ENCODE measurements at regions of chr9 and their contacts with region 1.

Region 1: GRCh38 chr9:15211160-15211814 is 95.7 kb downstream of the TTC39B start:
- DNase-seq: peak; percentile 47
- H3K4me3 Mint-ChIP-seq: no peak overlapping the region
- H3K27ac Mint-ChIP-seq: no peak overlapping the region
- H3K4me1 Mint-ChIP-seq: peaks cover 39% of the 10 kb centered on the region
- H3K27me3 Mint-ChIP-seq: no peaks in the 10 kb centered on the region

Region 2: GRCh38 chr9:14383294-14383693 is 828.0 kb before region 1 on chr9:
- intact Hi-C with region 1: no loop called
- DNase-seq: no peak
- H3K4me3 Mint-ChIP-seq: no peak overlapping the region
- H3K27ac Mint-ChIP-seq: no peak overlapping the region
- H3K4me1 Mint-ChIP-seq: no peaks in the 10 kb centered on the region
- H3K27me3 Mint-ChIP-seq: no peaks in the 10 kb centered on the region

Region 3: DNA sequence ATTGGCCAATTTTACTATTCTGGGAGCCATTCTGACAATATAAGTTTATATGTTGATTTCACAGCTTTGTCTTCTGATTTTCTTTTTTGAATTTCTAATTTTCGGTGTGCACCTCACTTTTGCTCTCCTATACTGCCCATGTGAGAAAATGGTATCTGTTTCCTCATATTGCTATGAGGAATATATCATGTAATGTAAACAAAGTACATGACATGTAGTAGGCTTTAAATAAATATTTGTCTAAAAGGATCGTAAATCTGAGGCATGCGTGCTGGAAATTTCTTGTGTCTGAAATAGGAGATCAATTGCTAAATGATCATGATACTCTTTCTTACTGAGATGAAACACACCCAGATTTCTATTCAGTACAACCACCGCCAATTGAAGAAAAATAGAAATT is 638.0 kb before region 1 on chr9:
- intact Hi-C with region 1: no loop called
- DNase-seq: no peak
- H3K4me3 Mint-ChIP-seq: no peak overlapping the region
- H3K27ac Mint-ChIP-seq: no peak overlapping the region
- H3K4me1 Mint-ChIP-seq: no peaks in the 10 kb centered on the region
- H3K27me3 Mint-ChIP-seq: peaks cover 7% of the 10 kb centered on the region

Region 4: DNA sequence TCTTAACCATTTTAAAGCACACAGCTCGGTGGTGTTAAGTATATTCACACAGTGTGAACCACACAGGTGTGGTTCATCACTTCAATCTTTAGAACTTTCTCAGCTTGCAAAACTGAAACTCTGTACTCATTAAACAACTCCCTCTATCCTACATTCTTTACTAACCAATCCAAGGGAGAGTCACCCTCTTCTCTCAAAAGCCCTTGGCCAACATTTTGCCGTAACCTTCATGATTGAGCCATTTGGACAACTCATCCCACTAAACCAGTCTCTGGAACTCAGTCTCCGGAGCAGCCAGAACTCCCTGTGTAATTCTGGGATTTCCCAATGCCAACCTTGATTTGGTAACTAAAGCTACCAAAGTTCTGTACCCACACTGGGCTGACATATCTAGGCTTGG is 11.0 kb after region 1 on chr9:
- intact Hi-C with region 1: loop called (anchors 1 kb)
- DNase-seq: no peak
- H3K4me3 Mint-ChIP-seq: no peak overlapping the region
- H3K27ac Mint-ChIP-seq: peak overlapping the region; percentile 31
- H3K4me1 Mint-ChIP-seq: peaks cover 41% of the 10 kb centered on the region
- H3K27me3 Mint-ChIP-seq: no peaks in the 10 kb centered on the region

Region 5: DNA sequence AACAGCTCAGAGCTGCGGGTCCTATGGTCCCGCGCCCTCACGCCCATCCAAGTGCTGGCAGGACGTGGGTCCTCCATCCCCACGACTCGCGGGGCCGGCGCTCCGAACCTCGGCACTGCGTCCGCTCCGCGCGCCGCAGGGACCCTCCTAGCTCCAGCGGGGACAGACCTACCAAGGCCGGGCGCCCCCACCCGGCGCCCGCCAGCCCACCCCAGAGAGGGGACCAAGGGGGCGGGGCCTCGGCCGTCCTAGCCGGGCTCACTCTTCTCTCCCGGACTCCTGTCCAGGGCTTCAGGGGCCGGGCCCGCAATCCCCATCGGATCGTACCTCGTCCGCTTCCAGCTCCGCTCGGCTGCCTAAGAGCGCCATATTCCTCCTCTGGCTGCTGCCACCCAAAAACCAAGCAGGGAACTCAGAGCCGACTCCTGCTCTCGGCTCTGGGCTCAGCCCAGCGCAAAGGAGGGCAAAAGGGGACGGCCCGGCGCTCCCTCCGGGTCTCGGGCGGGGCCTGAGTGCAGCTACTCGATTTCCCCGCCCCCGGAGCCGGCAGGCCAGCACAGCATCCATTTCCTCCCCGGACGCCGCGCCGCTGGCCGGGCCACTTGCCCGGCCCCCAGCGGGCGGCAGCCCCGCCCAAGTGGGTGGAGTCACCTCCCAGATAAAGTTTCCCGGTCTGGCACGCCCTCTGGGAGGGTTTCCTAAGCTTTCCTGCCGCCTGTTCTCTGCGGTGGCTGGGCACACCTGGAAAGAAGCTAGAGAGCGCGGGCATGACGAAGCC is 95.7 kb after region 1 on chr9 and contains the start of gene TTC39B:
- intact Hi-C with region 1: loop called (anchors 1 kb)
- DNase-seq: peak; percentile 82
- H3K4me3 Mint-ChIP-seq: peak within 1 kb of the TSS; percentile 98
- H3K27ac Mint-ChIP-seq: peak within 1 kb of the TSS; percentile 95
- H3K4me1 Mint-ChIP-seq: peaks cover 57% of the 10 kb centered on the region
- H3K27me3 Mint-ChIP-seq: no peaks in the 10 kb centered on the region
- total RNA-seq, gene TTC39B: 23.8 and 26.1 TPM in 2 replicates

Region 6: DNA sequence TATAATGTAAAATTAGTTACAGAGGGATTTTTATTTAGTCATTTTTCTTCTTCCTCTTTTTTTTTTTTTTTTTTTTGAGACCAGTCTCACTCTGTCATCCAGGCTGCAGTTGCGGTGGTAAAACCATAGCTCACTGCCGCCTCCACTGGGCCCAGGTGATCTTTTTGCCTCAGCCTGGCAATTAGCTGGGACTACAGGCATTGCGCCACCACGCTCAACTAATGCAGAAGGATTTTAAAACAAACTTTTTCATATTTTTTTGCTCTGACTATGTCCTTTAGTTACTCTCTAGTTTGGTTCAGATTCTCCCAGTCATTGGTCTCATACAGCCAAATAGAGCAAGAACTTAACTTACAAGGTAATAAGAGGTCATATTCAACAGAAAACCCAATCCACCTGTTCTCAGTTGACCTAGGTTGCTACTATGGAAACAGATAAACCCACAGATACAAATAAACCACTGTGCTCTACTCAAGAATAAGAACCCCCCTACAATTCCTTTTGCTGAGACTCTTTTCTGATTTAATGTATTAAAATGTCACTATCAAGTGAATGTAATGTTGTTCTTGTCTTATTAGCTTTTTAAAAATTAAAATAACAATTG is 145.9 kb after region 1 on chr9:
- intact Hi-C with region 1: loop called (anchors 2 kb)
- DNase-seq: peak; percentile 11
- H3K4me3 Mint-ChIP-seq: no peak overlapping the region
- H3K27ac Mint-ChIP-seq: no peak overlapping the region
- H3K4me1 Mint-ChIP-seq: peaks cover 16% of the 10 kb centered on the region
- H3K27me3 Mint-ChIP-seq: peaks cover 2% of the 10 kb centered on the region

Region 7: GRCh38 chr9:15416880-15417279 is 205.6 kb after region 1 on chr9:
- intact Hi-C with region 1: loop called (anchors 1 kb)
- DNase-seq: no peak
- H3K4me3 Mint-ChIP-seq: no peak overlapping the region
- H3K27ac Mint-ChIP-seq: no peak overlapping the region
- H3K4me1 Mint-ChIP-seq: peaks cover 6% of the 10 kb centered on the region
- H3K27me3 Mint-ChIP-seq: peaks cover 4% of the 10 kb centered on the region

Region 8: GRCh38 chr9:15510789-15511575 is 299.7 kb after region 1 on chr9 and contains the start of gene PSIP1:
- intact Hi-C with region 1: loop called (anchors 5 kb)
- DNase-seq: peak; percentile 84
- H3K4me3 Mint-ChIP-seq: peak within 1 kb of the TSS; percentile 96
- H3K27ac Mint-ChIP-seq: peak within 1 kb of the TSS; percentile 100
- H3K4me1 Mint-ChIP-seq: peaks cover 52% of the 10 kb centered on the region
- H3K27me3 Mint-ChIP-seq: peaks cover 4% of the 10 kb centered on the region
- total RNA-seq, gene PSIP1: 90.6 and 95.3 TPM in 2 replicates